ENCODE measurements at regions of chr10 and their contacts with region 1.

Region 1: GRCh38 chr10:122357685-122358084 is 16.8 kb upstream of the PLEKHA1 start:
- DNase-seq: no peak
- H3K4me3 ChIP-seq: no peak overlapping the region
- H3K27me3 ChIP-seq: peaks cover 3% of the 10 kb centered on the region
- CTCF ChIP-seq: no peak

Region 2: GRCh38 chr10:122298598-122299301 is 58.9 kb before region 1 on chr10:
- CTCF ChIA-PET with region 1: no interaction called
- POLR2A ChIA-PET with region 1: no interaction called
- DNase-seq: no peak
- H3K4me3 ChIP-seq: peak overlapping the region; percentile 10; the same call in 1 of the 2 replicates
- H3K27me3 ChIP-seq: peaks cover 6% of the 10 kb centered on the region
- CTCF ChIP-seq: peak; percentile 88

Region 3: GRCh38 chr10:122342293-122343134 is 15.2 kb before region 1 on chr10:
- CTCF ChIA-PET with region 1: interaction called, 11 read pairs
- POLR2A ChIA-PET with region 1: no interaction called
- DNase-seq: peak; percentile 49
- H3K4me3 ChIP-seq: no peak overlapping the region
- H3K27me3 ChIP-seq: no peaks in the 10 kb centered on the region
- CTCF ChIP-seq: peak; percentile 83